ENCODE measurements at regions of chr2 and their contacts with region 1.

Region 1: DNA sequence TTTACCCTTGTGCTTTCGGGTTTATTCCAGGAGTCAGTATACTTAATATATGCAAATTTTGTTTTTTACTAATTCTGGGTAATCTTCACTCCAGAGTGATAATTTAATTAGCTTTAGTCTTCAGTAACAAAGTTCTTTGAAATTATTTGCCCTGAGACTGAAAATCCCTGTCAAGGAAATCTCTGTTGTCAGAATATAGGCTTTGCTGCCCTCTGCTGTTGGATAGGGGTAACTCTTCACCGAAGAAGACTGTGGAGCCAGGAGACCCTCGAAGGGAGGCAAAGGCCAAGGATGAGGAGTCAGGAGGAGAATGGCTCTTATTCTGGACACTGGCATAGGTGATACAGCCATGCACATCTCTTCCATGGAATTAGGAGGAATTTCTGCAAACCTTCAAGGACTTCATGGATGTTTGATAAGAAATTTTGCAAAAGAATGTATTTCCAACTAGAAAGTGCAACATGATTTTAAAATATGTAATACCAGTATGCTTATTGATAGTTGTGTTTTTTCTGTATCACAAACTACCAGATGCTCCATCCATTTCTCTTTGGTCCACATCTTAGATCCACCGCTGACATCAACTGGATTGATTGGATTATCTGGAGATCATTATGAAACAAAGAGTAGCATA is 182.3 kb downstream of the RDH14 start:
- DNase-seq: no peak
- ATAC-seq: peak; percentile 46 to 71 (median 52)
- H3K4me3 ChIP-seq: no peak overlapping the region
- H3K27ac ChIP-seq: no peak overlapping the region
- H3K4me1 ChIP-seq: no peaks in the 10 kb centered on the region
- H3K27me3 ChIP-seq: no peaks in the 10 kb centered on the region
- CTCF ChIP-seq: peak; percentile 79

Region 2: GRCh38 chr2:17719562-17720371 is 658.4 kb before region 1 on chr2:
- intact Hi-C with region 1: loop called in 1 of 2 experiments (anchors 10 kb)
- DNase-seq: no peak
- ATAC-seq: peak in 1 of 4 donors; percentile 56
- H3K4me3 ChIP-seq: no peak overlapping the region
- H3K27ac ChIP-seq: no peak overlapping the region
- H3K4me1 ChIP-seq: no peaks in the 10 kb centered on the region
- H3K27me3 ChIP-seq: no peaks in the 10 kb centered on the region
- CTCF ChIP-seq: peak; percentile 83

Region 3: DNA sequence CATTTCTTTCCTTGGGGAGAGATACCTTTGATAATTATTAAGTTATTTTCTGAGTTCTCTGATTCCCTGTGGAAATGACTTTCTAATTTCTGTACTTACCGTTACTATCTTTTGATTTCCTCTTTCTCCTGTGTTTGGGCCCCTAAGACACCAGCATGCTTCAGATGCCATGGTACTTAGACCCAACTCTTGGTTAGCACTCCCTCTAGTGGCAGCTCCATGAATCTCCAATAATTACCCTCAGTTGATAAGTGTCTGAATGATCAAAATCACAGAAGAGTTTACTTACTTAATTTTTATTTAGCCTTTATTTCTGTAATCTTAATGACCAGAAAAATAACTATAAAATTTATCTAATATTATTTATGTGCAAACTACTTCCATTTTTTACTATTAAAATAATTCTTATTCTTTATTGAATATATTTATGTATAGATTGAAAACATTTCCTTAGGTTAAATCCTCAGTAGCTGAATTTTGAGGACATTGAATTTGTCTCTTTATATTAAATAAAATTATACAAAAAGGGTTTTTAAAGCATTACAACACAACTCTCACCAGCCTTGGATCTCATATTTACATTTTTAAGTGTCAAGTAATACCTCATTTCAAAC is 199.3 kb before region 1 on chr2:
- intact Hi-C with region 1: loop called (anchors 5 to 10 kb)
- DNase-seq: no peak
- ATAC-seq: peak; percentile 74 to 93 (median 77)
- H3K4me3 ChIP-seq: no peak overlapping the region
- H3K27ac ChIP-seq: no peak overlapping the region
- H3K4me1 ChIP-seq: no peaks in the 10 kb centered on the region
- H3K27me3 ChIP-seq: no peaks in the 10 kb centered on the region
- CTCF ChIP-seq: peak; percentile 87

Region 4: DNA sequence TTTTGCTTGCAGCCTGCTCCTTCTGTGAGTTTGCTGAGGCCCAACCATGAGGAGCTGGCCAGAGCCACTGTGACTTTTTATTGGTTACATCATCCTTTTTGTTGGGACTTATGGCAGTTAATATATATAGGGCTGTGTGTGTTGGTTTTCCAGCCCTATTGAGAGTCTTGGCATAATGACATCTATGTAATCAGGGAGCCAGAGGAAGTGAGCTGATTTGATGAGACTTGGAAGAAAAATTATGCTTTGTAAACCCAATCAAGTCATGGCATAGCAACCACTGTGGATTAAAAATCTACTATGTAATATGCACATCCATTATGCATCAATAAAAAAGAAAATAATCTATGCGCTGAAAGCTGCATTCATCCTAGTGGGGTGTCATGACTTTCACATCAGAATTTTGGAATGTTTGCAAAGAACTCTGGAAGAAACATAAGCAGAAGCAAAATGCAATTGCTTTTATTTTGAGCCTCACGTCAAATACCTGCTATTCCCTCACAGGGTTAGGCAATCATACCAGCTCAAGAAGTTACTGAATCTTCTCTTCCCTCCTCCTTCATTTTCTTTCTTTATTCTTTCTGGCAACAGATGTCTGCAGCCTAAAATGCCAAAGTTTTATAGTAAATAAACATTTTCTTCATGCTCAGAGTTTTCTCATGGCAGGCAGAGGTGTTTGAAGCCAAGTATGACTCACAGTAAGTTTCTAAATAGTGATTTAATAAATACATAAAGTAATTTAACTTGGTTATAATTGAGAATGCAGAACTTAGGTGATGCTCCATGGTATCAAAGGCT is 191.1 kb before region 1 on chr2:
- intact Hi-C with region 1: loop called in 1 of 2 experiments (anchors 10 kb)
- DNase-seq: no peak
- ATAC-seq: no peak
- H3K4me3 ChIP-seq: no peak overlapping the region
- H3K27ac ChIP-seq: no peak overlapping the region
- H3K4me1 ChIP-seq: no peaks in the 10 kb centered on the region
- H3K27me3 ChIP-seq: no peaks in the 10 kb centered on the region
- CTCF ChIP-seq: no peak

Region 5: GRCh38 chr2:18445433-18446320 is 67.5 kb after region 1 on chr2:
- intact Hi-C with region 1: no loop called
- DNase-seq: peak; percentile 56 to 67
- ATAC-seq: peak; percentile 37 to 78 (median 72)
- H3K4me3 ChIP-seq: no peak overlapping the region
- H3K27ac ChIP-seq: peak overlapping the region; percentile 1
- H3K4me1 ChIP-seq: peaks cover 2% of the 10 kb centered on the region
- H3K27me3 ChIP-seq: no peaks in the 10 kb centered on the region
- CTCF ChIP-seq: no peak

Measured in psoas muscle (tissue), 8 donors.